ENCODE measurements at regions of chr6 and their contacts with region 1.

Region 1: DNA sequence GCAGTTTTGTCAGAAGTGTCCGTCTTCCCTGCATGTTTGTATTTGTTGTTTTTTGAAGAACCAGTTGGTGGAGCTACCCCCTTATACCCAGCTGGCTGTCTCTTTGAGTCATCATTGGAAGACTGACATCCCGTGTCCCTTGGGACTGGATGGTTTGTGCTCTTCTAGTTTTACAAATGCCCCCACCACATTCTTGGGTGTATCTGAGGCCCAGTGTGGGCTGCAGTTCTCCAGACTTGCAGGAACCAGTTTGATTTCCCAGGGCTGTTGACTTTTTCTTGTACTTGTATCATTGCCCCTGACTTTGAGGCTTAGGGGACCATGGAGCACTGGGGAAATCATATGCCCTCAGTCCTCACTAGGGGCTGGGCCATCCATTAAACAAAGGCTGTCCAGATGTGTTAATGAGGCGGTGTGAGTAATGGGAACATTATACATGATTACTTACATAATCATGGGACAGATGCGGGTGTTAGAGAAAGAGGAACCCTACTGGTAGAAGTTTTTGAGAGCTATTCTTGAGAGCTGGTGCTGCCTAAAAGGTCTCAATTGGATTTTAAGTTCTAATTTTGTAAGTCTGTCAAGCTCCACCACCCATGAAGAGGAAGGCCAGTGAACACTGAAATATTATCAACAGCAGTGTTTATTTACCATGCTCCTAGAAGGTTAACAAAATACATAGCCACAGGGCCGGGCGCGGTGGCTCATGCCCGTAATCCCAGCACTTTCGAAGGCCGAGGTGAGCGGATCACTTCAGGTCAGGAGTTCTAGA is 8.4 kb downstream of the JARID2 start:
- DNase-seq: no peak
- ATAC-seq: no peak
- H3K4me3 Mint-ChIP-seq: peak overlapping the region; percentile 55
- H3K27ac Mint-ChIP-seq: peak overlapping the region; percentile 88
- H3K4me1 Mint-ChIP-seq: peaks cover 97% of the 10 kb centered on the region
- H3K27me3 Mint-ChIP-seq: no peaks in the 10 kb centered on the region
- CTCF ChIP-seq: no peak

Region 2: DNA sequence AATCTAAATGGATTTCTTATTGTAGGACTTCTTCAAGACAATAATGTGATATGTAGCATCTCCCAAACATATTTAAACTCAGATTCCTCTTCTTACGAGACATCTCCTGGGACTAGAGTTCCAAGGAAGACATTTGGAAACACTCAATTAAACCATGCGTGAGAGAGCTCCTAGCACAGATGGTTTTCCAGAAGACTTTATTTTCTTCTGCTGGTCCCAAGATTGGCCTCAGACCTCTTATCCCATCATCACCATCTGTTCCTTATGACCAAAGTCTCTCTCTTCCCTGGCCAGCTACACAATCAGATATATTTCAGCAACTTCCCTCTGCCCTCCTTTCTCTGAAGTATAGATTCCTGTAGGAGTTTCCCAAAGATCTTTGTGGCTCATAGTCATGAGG is 101.6 kb before region 1 on chr6:
- CTCF ChIA-PET with region 1: no interaction called
- POLR2A ChIA-PET with region 1: no interaction called
- intact Hi-C with region 1: no loop called
- DNase-seq: no peak
- ATAC-seq: no peak
- H3K4me3 Mint-ChIP-seq: no peak overlapping the region
- H3K27ac Mint-ChIP-seq: no peak overlapping the region
- H3K4me1 Mint-ChIP-seq: no peaks in the 10 kb centered on the region
- H3K27me3 Mint-ChIP-seq: no peaks in the 10 kb centered on the region
- CTCF ChIP-seq: no peak

Region 3: DNA sequence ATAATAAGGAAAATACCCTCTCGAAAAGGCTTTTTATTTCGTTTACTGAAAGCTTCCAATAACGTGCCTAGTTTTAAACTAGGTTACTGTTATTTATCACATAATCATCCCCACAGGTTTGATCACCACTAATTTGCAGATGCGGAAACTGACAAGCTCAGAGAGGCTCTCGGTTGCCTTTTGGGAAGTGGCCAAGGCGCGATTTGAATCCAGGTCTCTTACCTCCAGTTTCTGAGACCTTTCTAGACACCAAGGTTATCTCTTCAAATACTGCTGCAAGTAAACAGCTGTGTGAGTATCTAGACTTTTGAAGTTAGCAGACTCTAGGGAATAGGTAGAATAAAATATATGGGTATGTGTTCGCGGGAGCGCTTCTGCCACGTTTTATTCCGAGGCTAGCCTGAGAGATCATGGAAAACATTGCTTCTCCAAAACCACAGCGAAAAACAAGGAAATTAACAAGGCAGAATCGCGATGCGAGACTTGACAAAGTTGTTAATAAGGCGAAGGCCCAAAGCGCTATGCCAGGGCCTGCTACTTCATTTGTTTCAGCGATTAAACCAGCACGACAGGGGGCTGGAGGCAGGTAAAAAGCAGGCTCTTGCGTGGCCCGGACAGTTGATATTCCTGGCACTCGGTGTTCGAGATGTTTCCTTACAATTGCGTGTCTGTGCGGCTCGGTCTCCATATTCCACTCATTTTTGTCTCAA is 10.2 kb before region 1 on chr6:
- CTCF ChIA-PET with region 1: no interaction called
- POLR2A ChIA-PET with region 1: no interaction called
- intact Hi-C with region 1: no loop called
- DNase-seq: no peak
- ATAC-seq: no peak
- H3K4me3 Mint-ChIP-seq: peak overlapping the region; percentile 75
- H3K27ac Mint-ChIP-seq: peak overlapping the region; percentile 43
- H3K4me1 Mint-ChIP-seq: peaks cover 6% of the 10 kb centered on the region
- H3K27me3 Mint-ChIP-seq: no peaks in the 10 kb centered on the region
- CTCF ChIP-seq: no peak

Region 4: GRCh38 chr6:15299430-15300131 is 45.3 kb after region 1 on chr6:
- CTCF ChIA-PET with region 1: interaction called, 6 read pairs
- POLR2A ChIA-PET with region 1: interaction called, 3 read pairs
- intact Hi-C with region 1: loop called (anchors 5 kb)
- DNase-seq: peak; percentile 86
- ATAC-seq: peak; percentile 65
- H3K4me3 Mint-ChIP-seq: peak overlapping the region; percentile 34
- H3K27ac Mint-ChIP-seq: peak overlapping the region; percentile 83
- H3K4me1 Mint-ChIP-seq: peaks cover 82% of the 10 kb centered on the region
- H3K27me3 Mint-ChIP-seq: no peaks in the 10 kb centered on the region
- CTCF ChIP-seq: no peak